ENCODE measurements at regions of chr3 and their contacts with region 1.

Region 1: GRCh38 chr3:152471814-152472671 is 203.3 kb downstream of the MBNL1 start:
- DNase-seq: no peak
- H3K4me3 ChIP-seq: no peak overlapping the region
- H3K27ac ChIP-seq: no peak overlapping the region
- H3K4me1 ChIP-seq: no peaks in the 10 kb centered on the region
- H3K27me3 ChIP-seq: no peaks in the 10 kb centered on the region
- CTCF ChIP-seq: peak; percentile 28 to 76 (median 50)
- POLR2A ChIP-seq: no peak

Region 2: GRCh38 chr3:151301787-151302186 is 1170.3 kb before region 1 on chr3:
- intact Hi-C with region 1: no loop called
- DNase-seq: no peak
- H3K4me3 ChIP-seq: no peak overlapping the region
- H3K27ac ChIP-seq: no peak overlapping the region
- H3K4me1 ChIP-seq: peaks cover 17% of the 10 kb centered on the region
- H3K27me3 ChIP-seq: no peaks in the 10 kb centered on the region
- CTCF ChIP-seq: no peak
- POLR2A ChIP-seq: no peak

Region 3: DNA sequence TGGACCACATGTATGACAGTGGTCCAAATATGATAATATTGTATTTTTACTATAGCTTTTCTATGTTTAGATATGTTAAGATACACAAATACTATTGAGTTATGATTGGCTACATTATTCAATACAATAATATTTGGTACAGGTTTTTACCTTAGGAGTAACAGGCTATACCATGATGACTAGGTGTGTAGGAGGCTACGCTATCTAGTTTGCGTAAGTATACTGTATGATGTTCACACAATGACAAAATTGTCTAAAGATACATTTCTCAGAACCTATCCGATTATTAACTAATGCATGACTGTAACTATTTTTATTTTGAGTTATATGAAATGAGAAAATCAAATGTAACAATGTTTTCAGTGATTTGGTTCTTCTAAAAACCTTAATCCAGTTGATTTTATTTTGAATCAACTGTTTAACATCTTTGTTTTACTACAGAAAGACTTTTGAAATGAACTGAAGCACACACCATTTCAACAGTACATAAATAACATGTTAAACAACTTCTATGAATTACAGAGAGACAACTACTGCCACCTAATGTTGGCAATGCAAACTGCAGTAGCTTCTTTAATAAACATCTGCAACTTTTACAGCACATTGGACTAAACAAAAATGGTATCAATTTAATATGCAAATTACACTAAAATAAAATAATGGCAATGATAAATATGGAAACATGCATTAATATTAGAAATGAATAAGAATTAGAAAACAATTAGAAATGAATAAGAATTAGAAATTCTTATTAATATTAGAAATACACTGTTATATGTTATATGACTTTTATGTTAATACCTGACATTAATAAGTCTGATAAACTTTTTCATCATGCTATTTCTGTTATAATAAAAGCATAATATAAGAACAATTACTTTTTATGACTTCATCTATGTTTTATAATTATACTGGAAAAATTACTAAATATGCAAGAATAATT is 52.4 kb after region 1 on chr3:
- intact Hi-C with region 1: loop called (anchors 10 kb)
- DNase-seq: no peak
- H3K4me3 ChIP-seq: no peak overlapping the region
- H3K27ac ChIP-seq: no peak overlapping the region
- H3K4me1 ChIP-seq: no peaks in the 10 kb centered on the region
- H3K27me3 ChIP-seq: no peaks in the 10 kb centered on the region
- CTCF ChIP-seq: peak; percentile 74 to 84 (median 82)
- POLR2A ChIP-seq: no peak

Region 4: GRCh38 chr3:152574461-152575079 is 102.5 kb after region 1 on chr3:
- intact Hi-C with region 1: loop called (anchors 10 kb)
- DNase-seq: no peak
- H3K4me3 ChIP-seq: no peak overlapping the region
- H3K27ac ChIP-seq: no peak overlapping the region
- H3K4me1 ChIP-seq: no peaks in the 10 kb centered on the region
- H3K27me3 ChIP-seq: no peaks in the 10 kb centered on the region
- CTCF ChIP-seq: peak in 2 of 3 experiments; percentile 42 to 59
- POLR2A ChIP-seq: no peak